Caco-2 (cell line): ENCODE measurements at regions of chr12 and their contacts with region 1.

Region 1: DNA sequence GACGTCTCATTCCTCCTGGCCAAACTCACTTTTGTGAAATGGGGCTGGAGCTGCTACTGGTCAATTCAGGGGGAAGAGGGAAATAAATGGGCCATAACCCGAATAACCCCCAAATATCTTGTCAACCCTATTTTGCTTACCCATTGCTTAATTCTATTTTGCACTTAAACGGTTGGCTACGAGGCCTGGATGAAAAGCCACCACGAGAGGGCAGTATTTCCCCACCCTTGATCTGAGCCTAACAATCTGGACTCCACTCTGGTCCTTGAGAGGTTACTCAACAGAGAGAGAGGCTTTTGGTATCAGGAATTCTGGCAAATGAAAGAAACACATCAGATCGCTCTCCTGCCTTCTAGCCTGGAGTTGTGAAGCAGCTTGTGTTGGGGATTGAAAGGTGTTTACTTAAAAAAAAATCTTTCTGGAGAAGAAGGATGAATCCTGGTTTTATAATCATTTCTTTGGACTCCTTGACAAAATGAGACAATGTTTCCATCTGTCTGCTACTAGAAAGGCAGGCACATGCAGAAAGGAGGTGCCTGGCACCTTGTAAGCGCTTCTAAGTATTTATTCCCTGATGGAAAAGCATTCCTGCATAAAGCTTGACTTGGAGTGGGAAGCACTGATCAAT is 22.4 kb upstream of the FBXO21 start:
- DNase-seq: peak; percentile 57 to 73
- H3K4me3 ChIP-seq: no peak overlapping the region
- H3K4me3 Mint-ChIP-seq: no peak overlapping the region
- H3K27ac Mint-ChIP-seq: no peak overlapping the region
- H3K4me1 ChIP-seq: no peaks in the 10 kb centered on the region
- H3K4me1 Mint-ChIP-seq: no peaks in the 10 kb centered on the region
- H3K27me3 ChIP-seq: no peaks in the 10 kb centered on the region
- H3K27me3 Mint-ChIP-seq: peaks cover 30% of the 10 kb centered on the region
- CTCF ChIP-seq: peak; percentile 86 to 88

Region 2: DNA sequence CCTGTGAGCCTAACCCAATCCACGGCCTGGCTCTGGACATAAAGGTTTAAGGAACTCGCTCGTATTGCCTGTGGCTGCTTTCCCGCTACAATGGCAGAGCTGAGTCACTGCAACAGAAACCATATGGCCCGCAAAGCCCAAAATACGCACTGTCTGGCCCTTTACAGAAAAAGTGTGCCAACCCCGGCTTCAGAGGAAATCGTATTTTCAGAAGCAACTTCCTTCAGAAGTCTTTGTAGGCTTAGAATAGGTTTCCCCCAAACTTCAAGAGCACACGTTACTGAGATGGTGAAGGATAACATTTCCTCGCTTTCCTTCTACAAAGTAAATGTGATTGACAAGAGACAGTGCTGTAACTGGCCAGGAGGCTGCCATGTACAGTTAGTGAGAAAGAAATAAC is 78.6 kb before region 1 on chr12:
- CTCF ChIA-PET with region 1: no interaction called
- POLR2A ChIA-PET with region 1: no interaction called
- intact Hi-C with region 1: no loop called
- DNase-seq: no peak
- H3K4me3 ChIP-seq: no peak overlapping the region
- H3K4me3 Mint-ChIP-seq: no peak overlapping the region
- H3K27ac Mint-ChIP-seq: no peak overlapping the region
- H3K4me1 ChIP-seq: no peaks in the 10 kb centered on the region; the same call in 1 of the 2 replicates
- H3K4me1 Mint-ChIP-seq: no peaks in the 10 kb centered on the region
- H3K27me3 ChIP-seq: no peaks in the 10 kb centered on the region
- H3K27me3 Mint-ChIP-seq: no peaks in the 10 kb centered on the region
- CTCF ChIP-seq: no peak

Region 3: DNA sequence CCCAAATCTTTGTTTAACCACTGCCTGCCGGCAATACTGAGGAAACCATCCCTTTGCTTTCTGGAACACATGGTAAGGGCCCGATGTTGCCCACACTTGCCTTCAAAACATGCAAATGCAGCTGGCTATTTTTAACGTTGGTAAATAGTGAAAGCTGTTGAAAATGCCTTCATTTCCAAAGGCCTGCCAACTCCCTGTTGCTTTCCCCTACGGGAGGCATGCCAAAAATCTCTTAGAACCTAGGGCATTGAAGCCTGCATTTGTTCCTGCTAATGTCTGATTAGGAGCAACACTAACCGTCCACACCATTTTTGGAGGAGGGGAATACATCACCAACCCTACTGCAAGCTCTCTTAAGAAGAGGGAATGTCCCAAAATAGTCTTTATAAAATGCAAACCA is 301.3 kb after region 1 on chr12:
- CTCF ChIA-PET with region 1: no interaction called
- POLR2A ChIA-PET with region 1: no interaction called
- intact Hi-C with region 1: no loop called
- DNase-seq: no peak
- H3K4me3 ChIP-seq: no peak overlapping the region
- H3K4me3 Mint-ChIP-seq: no peak overlapping the region
- H3K27ac Mint-ChIP-seq: no peak overlapping the region
- H3K4me1 ChIP-seq: no peaks in the 10 kb centered on the region
- H3K4me1 Mint-ChIP-seq: no peaks in the 10 kb centered on the region
- H3K27me3 ChIP-seq: no peaks in the 10 kb centered on the region
- H3K27me3 Mint-ChIP-seq: peaks cover 23% of the 10 kb centered on the region
- CTCF ChIP-seq: no peak

Region 4: GRCh38 chr12:117587631-117588287 is 375.1 kb after region 1 on chr12:
- CTCF ChIA-PET with region 1: no interaction called
- POLR2A ChIA-PET with region 1: no interaction called
- intact Hi-C with region 1: loop called (anchors 1 kb)
- DNase-seq: peak; percentile 55 to 70
- H3K4me3 ChIP-seq: no peak overlapping the region
- H3K4me3 Mint-ChIP-seq: peak overlapping the region; percentile 30
- H3K27ac Mint-ChIP-seq: no peak overlapping the region
- H3K4me1 ChIP-seq: no peaks in the 10 kb centered on the region
- H3K4me1 Mint-ChIP-seq: peaks cover 6% of the 10 kb centered on the region
- H3K27me3 ChIP-seq: no peaks in the 10 kb centered on the region
- H3K27me3 Mint-ChIP-seq: peaks cover 9% of the 10 kb centered on the region
- CTCF ChIP-seq: peak; percentile 84 to 85

Region 5: GRCh38 chr12:117850048-117850447 is 637.4 kb after region 1 on chr12:
- CTCF ChIA-PET with region 1: no interaction called
- POLR2A ChIA-PET with region 1: no interaction called
- intact Hi-C with region 1: loop called (anchors 5 kb)
- DNase-seq: peak; percentile 46 to 58
- H3K4me3 ChIP-seq: no peak overlapping the region
- H3K4me3 Mint-ChIP-seq: no peak overlapping the region
- H3K27ac Mint-ChIP-seq: no peak overlapping the region
- H3K4me1 ChIP-seq: no peaks in the 10 kb centered on the region; the same call in 1 of the 2 replicates
- H3K4me1 Mint-ChIP-seq: no peaks in the 10 kb centered on the region
- H3K27me3 ChIP-seq: no peaks in the 10 kb centered on the region
- H3K27me3 Mint-ChIP-seq: peaks cover 5% of the 10 kb centered on the region
- CTCF ChIP-seq: peak; percentile 75 to 77